Naive thymus-derived CD4-positive, alpha-beta T cell (primary cell): ENCODE measurements at regions of chr10 and their contacts with region 1.

Region 1: DNA sequence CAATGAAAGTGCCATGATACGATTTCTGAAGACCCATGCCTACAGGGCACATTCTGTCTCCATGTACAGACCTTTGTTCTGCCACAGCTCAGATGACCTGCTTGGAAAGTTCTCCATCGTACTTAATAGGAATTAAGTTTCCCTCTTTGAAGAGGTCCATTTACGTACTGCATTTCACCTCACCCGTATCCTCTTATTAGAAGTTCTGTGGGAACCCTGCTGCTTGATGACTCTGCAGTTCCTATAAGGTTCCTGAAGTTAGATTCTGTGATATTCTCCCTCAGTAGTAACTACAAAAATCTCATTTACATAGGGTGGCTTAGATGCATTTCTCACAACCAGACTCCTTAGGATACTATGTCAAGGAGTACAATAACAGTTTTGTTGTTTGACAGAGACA is 50.9 kb downstream of the MINDY3 start:
- DNase-seq: no peak
- ATAC-seq: no peak
- H3K4me3 ChIP-seq: no peak overlapping the region
- H3K4me3 Mint-ChIP-seq: no peak overlapping the region
- H3K27ac ChIP-seq: no peak overlapping the region
- H3K27ac Mint-ChIP-seq: peak overlapping the region in 1 of 9 donors; percentile 11
- H3K4me1 ChIP-seq: no peaks in the 10 kb centered on the region
- H3K4me1 Mint-ChIP-seq: peaks cover 0 to 10% (median 6%) of the 10 kb centered on the region in 7 donors
- H3K27me3 ChIP-seq: no peaks in the 10 kb centered on the region
- H3K27me3 Mint-ChIP-seq: no peaks in the 10 kb centered on the region

Region 2: DNA sequence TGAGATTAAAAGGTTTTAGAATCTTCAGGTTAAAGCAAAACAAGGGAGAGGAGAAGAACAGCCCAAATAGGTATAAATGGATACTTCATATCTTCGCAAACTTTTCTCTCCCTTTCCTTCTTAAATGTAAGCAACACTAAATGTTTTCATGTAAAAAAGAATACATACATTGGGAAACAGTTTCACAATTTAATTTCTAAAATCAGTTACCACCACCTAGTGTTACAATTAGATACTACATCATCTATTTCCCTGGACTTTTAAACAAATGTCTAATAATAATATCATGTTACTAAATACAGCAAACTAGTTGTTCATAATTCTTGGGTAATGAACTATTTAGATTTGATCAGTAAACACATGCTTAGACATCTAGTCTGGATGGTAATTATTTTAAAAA is 15.0 kb after region 1 on chr10:
- CTCF ChIA-PET with region 1: no interaction called
- POLR2A ChIA-PET with region 1: no interaction called
- intact Hi-C with region 1: loop called in 1 of 2 experiments (anchors 2 kb)
- DNase-seq: no peak
- ATAC-seq: no peak
- H3K4me3 ChIP-seq: no peak overlapping the region
- H3K4me3 Mint-ChIP-seq: no peak overlapping the region
- H3K27ac ChIP-seq: no peak overlapping the region
- H3K27ac Mint-ChIP-seq: no peak overlapping the region
- H3K4me1 ChIP-seq: no peaks in the 10 kb centered on the region
- H3K4me1 Mint-ChIP-seq: peaks cover 0 to 4% (median 0%) of the 10 kb centered on the region in 7 donors
- H3K27me3 ChIP-seq: no peaks in the 10 kb centered on the region
- H3K27me3 Mint-ChIP-seq: no peaks in the 10 kb centered on the region

Region 3: GRCh38 chr10:16146993-16147392 is 337.5 kb after region 1 on chr10:
- CTCF ChIA-PET with region 1: no interaction called
- POLR2A ChIA-PET with region 1: no interaction called
- intact Hi-C with region 1: no loop called
- DNase-seq: no peak
- ATAC-seq: no peak
- H3K4me3 ChIP-seq: no peak overlapping the region
- H3K4me3 Mint-ChIP-seq: no peak overlapping the region
- H3K27ac ChIP-seq: no peak overlapping the region
- H3K27ac Mint-ChIP-seq: no peak overlapping the region
- H3K4me1 ChIP-seq: no peaks in the 10 kb centered on the region
- H3K4me1 Mint-ChIP-seq: no peaks in the 10 kb centered on the region
- H3K27me3 ChIP-seq: no peaks in the 10 kb centered on the region
- H3K27me3 Mint-ChIP-seq: peaks cover 0 to 17% (median 11%) of the 10 kb centered on the region in 5 donors